ENCODE measurements at regions of chr9 and their contacts with region 1.

Region 1: GRCh38 chr9:76302947-76303940 is 91.0 kb downstream of the RFK start:
- DNase-seq: no peak
- H3K4me3 ChIP-seq: no peak overlapping the region
- H3K27me3 ChIP-seq: no peaks in the 10 kb centered on the region
- CTCF ChIP-seq: peak; percentile 57

Region 2: GRCh38 chr9:76086539-76086938 is 216.7 kb before region 1 on chr9:
- CTCF ChIA-PET with region 1: interaction called, 11 read pairs
- POLR2A ChIA-PET with region 1: no interaction called
- DNase-seq: no peak
- H3K4me3 ChIP-seq: no peak overlapping the region
- H3K27me3 ChIP-seq: no peaks in the 10 kb centered on the region
- CTCF ChIP-seq: 0 out of 2 replicates have a peak, but pooled peaks have one; percentile 10